Prostate gland (tissue), 2 donors: ENCODE measurements at regions of chr20 and their contacts with region 1.

Region 1: DNA sequence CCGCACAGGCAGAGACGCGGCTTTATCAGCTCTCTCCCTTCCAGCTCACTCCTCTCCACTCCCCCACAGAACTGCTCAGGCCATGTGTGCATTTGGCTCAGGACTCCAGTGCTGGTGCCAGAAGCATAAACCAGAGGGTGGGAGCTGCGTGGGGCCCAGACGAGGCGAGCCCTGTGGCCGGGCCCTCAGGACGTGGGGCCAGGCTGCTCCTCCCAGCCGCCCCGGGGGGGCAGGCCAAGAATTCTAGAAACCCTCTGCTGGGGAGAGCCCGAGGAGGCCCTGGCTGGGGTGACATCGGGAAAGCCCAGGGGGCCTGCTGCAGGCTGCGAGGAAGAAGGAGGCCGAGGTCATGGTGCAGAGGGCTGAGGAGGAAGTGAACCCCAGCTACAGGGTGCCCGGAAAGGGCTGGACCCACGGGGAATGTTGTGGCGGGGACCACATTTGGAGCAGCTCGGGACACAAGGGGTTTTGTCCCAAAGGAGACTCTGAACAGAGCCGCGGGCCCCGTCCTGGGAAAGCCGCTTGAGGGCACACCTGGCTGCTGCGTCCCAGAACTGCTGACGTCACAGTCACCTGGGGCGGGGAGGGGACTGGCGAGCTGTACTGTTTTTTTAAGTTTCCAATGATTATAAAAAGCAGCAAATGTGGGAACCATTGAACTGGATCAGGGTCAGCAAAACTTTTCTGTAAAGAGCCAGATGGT is 107.1 kb downstream of the BANF2 start:
- DNase-seq: no peak
- H3K4me3 ChIP-seq: no peak overlapping the region
- H3K27ac ChIP-seq: peak overlapping the region; percentile 42 to 52
- H3K4me1 ChIP-seq: peaks cover 6% of the 10 kb centered on the region
- H3K27me3 ChIP-seq: no peaks in the 10 kb centered on the region
- CTCF ChIP-seq: no peak
- POLR2A ChIP-seq: no peak

Region 2: GRCh38 chr20:17710379-17711266 is 96.3 kb before region 1 on chr20:
- intact Hi-C with region 1: loop called (anchors 10 kb)
- DNase-seq: no peak
- H3K4me3 ChIP-seq: no peak overlapping the region
- H3K27ac ChIP-seq: no peak overlapping the region
- H3K4me1 ChIP-seq: no peaks in the 10 kb centered on the region
- H3K27me3 ChIP-seq: no peaks in the 10 kb centered on the region
- CTCF ChIP-seq: no peak
- POLR2A ChIP-seq: no peak

Region 3: DNA sequence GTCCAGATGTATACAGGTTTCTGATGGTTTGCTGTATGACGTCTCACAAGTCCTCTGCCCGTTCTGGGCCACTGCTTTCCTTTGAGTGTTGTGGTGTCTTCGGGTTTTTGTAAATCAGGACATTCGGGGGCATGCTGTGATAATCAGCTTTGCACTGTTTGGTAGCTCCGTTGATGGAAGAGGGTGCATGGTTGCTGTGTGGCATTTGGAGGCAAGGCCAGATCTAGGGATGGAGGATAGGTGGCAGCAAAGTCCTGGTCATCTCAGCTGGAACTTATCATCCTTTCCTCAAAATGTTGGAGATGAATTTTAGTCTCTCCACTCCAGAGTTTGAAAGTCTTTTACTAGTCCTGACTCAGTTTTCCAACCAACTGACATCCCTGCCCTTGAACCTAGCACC is 1097.7 kb after region 1 on chr20:
- intact Hi-C with region 1: no loop called
- DNase-seq: no peak
- H3K4me3 ChIP-seq: no peak overlapping the region
- H3K27ac ChIP-seq: no peak overlapping the region
- H3K4me1 ChIP-seq: no peaks in the 10 kb centered on the region
- H3K27me3 ChIP-seq: no peaks in the 10 kb centered on the region
- CTCF ChIP-seq: peak in 2 of 4 experiments; percentile 23 to 32
- POLR2A ChIP-seq: no peak